Common myeloid progenitor, CD34-positive (primary cell): ENCODE measurements at regions of chr17 and their contacts with region 1.

Region 1: DNA sequence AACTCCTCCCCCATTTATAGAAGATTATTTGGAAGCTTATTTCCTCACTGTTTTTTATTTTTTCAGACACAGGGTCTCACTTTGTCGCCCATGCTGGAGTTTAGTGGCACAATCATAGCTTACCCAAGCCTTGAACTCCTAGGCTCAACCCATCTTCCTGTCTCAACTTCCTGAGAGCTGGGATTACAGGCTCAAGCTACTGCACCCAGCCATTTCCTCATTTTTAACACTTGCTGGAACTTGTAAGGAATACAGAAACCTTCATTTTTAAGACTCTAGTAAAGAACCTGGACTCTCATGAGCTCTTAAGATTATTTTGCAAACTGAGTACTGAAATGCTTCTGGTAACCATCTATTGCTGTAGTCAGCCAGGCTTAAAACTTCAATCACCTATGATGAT is 29.9 kb downstream of the KANSL1 start:
- DNase-seq: no peak
- H3K4me3 ChIP-seq: peak overlapping the region in 2 of 7 experiments; percentile 12 to 23
- H3K27ac ChIP-seq: peak overlapping the region in 1 of 2 experiments; percentile 54
- H3K4me1 ChIP-seq: peaks cover 17 to 34% (median 26%) of the 10 kb centered on the region in 4 experiments
- H3K27me3 ChIP-seq: no peaks in the 10 kb centered on the region

Region 2: GRCh38 chr17:46179375-46179999 is 16.2 kb after region 1 on chr17:
- CTCF ChIA-PET with region 1: interaction called, 24 read pairs
- POLR2A ChIA-PET with region 1: no interaction called
- DNase-seq: peak in 2 of 3 donors; percentile 85 to 86
- H3K4me3 ChIP-seq: peak overlapping the region in 2 of 7 experiments; percentile 12 to 54
- H3K27ac ChIP-seq: no peak overlapping the region
- H3K4me1 ChIP-seq: peaks cover 15 to 40% (median 25%) of the 10 kb centered on the region in 4 experiments
- H3K27me3 ChIP-seq: no peaks in the 10 kb centered on the region